IMR-90 (cell line): ENCODE measurements at regions of chr16 and their contacts with region 1.

Region 1: DNA sequence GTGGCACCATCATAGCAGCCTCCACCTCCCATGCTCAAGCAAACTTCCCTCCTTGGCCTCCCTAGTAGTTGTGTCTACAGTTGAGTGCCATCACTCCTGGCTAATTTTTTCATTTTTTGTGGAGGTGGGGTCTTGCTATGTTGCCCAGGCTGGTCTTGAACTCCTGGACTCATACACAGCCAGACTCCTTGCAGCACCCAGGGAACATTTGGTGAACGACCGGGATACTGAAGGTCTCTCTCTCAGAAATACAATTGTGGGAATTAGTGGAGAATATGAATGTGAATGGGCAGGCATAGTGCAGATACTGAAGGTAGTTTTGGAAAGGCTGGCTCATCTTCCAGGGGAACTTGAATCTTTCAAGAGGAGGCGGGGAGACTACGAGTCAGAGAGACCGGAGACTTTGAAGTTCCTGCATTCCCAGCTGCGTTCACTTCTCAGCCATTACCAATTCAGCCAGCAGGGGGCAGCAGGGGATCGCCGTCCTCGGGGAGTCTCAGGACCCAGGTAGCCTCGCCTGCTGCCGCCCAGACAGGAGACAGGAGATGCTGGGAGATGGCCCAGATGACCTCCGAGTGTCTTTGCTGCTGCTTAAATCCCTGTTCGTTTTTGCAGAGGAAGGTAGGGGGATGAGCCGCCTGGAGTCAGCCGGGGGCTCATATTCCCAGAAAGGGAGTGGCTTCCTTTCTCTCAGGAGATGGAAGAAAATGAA is 68.6 kb downstream of the HAPSTR1 start:
- DNase-seq: peak; percentile 66
- ATAC-seq: peak; percentile 99
- H3K4me3 ChIP-seq: no peak overlapping the region
- H3K27ac ChIP-seq: no peak overlapping the region
- H3K4me1 ChIP-seq: no peaks in the 10 kb centered on the region
- H3K27me3 ChIP-seq: no peaks in the 10 kb centered on the region
- CTCF ChIP-seq: peak; percentile 83
- POLR2A ChIP-seq: no peak
- RAD21 ChIP-seq: peak; percentile 81

Region 2: GRCh38 chr16:8878521-8878911 is 281.5 kb before region 1 on chr16:
- CTCF ChIA-PET with region 1: no interaction called
- POLR2A ChIA-PET with region 1: no interaction called
- dilution Hi-C with region 1: no loop called
- in situ Hi-C with region 1: no loop called
- intact Hi-C with region 1: no loop called
- DNase-seq: peak; percentile 86
- ATAC-seq: peak; percentile 73
- H3K4me3 ChIP-seq: no peak overlapping the region
- H3K27ac ChIP-seq: peak overlapping the region; percentile 68
- H3K4me1 ChIP-seq: peaks cover 15% of the 10 kb centered on the region
- H3K27me3 ChIP-seq: no peaks in the 10 kb centered on the region
- CTCF ChIP-seq: no peak
- POLR2A ChIP-seq: no peak
- RAD21 ChIP-seq: no peak

Region 3: DNA sequence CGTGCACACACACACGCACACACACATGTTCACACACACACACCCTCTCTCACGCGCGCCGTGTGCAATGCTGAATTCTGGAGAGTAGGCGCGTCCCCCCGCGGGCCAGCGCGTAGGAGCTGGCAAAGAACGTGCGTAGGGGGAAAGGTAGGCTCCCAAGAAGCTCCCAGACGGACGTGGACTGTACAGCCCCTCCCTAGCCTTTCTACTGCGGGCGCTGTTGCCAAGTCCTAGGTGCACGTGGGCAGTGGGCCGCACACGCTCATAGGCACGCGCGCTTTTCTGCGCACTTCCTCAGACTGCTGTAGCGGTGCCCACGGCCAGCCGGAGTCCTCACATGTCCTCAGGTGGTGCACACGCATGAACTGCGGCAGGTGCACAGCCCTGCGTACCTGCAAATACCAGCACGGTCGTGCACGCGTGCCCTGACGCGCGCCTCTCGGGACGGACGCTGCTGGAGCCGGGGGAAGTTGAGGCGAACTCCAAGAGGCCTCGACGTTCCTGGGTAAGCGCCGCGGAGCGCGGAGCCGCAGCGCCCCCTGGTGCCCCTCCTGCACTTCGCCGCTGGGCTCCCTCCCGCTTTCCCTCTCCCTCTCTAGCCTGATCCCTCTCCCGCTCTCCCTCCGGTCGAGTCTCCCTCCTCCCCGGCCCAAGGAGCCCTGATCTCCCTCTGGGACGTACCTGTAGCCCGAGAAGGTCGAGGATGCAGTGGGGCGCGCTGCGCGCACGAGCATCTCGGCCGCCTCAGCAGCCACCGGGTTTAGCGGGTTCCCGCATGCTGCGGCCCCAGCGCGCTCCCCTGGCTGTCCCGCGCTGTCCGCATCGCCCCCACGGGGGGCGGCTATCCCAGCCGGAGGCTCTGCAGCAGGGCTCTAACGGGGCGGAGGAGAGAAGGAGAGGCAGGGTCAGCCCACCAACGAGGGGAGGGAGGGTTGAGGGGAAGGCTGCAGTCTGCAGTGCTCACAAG is 1021.5 kb after region 1 on chr16:
- CTCF ChIA-PET with region 1: no interaction called
- POLR2A ChIA-PET with region 1: no interaction called
- dilution Hi-C with region 1: no loop called
- in situ Hi-C with region 1: loop called (anchors 25 kb)
- intact Hi-C with region 1: loop called (anchors 2 kb)
- DNase-seq: peak; percentile 11
- ATAC-seq: peak; percentile 73
- H3K4me3 ChIP-seq: no peak overlapping the region
- H3K27ac ChIP-seq: no peak overlapping the region
- H3K4me1 ChIP-seq: no peaks in the 10 kb centered on the region
- H3K27me3 ChIP-seq: peaks cover 5% of the 10 kb centered on the region
- CTCF ChIP-seq: peak; percentile 58
- POLR2A ChIP-seq: no peak
- RAD21 ChIP-seq: peak; percentile 68

Region 4: GRCh38 chr16:10737068-10737625 is 1577.2 kb after region 1 on chr16:
- CTCF ChIA-PET with region 1: no interaction called
- POLR2A ChIA-PET with region 1: no interaction called
- dilution Hi-C with region 1: no loop called
- in situ Hi-C with region 1: loop called (anchors 10 kb)
- intact Hi-C with region 1: loop called (anchors 1 kb)
- DNase-seq: peak; percentile 61
- ATAC-seq: peak; percentile 89
- H3K4me3 ChIP-seq: no peak overlapping the region
- H3K27ac ChIP-seq: no peak overlapping the region
- H3K4me1 ChIP-seq: peaks cover 2% of the 10 kb centered on the region; the same call in 1 of the 2 replicates
- H3K27me3 ChIP-seq: no peaks in the 10 kb centered on the region
- CTCF ChIP-seq: peak; percentile 96
- POLR2A ChIP-seq: 0 out of 2 replicates have a peak, but pooled peaks have one; percentile 26
- RAD21 ChIP-seq: peak; percentile 96

Region 5: GRCh38 chr16:10743610-10744393 is 1583.8 kb after region 1 on chr16 and contains the start of gene NUBP1:
- CTCF ChIA-PET with region 1: no interaction called
- POLR2A ChIA-PET with region 1: no interaction called
- dilution Hi-C with region 1: no loop called
- in situ Hi-C with region 1: loop called (anchors 10 kb)
- intact Hi-C with region 1: no loop called
- DNase-seq: peak; percentile 97
- ATAC-seq: peak; percentile 97
- H3K4me3 ChIP-seq: peak within 1 kb of the TSS; percentile 80
- H3K27ac ChIP-seq: peak within 1 kb of the TSS; percentile 98
- H3K4me1 ChIP-seq: peaks cover 2% of the 10 kb centered on the region; the same call in 1 of the 2 replicates
- H3K27me3 ChIP-seq: no peaks in the 10 kb centered on the region
- CTCF ChIP-seq: no peak
- POLR2A ChIP-seq: peak; percentile 96
- RAD21 ChIP-seq: no peak
- total RNA-seq, gene NUBP1: 28.0 and 29.7 TPM in 2 replicates